ENCODE measurements at regions of chr16 and their contacts with region 1.

Region 1: DNA sequence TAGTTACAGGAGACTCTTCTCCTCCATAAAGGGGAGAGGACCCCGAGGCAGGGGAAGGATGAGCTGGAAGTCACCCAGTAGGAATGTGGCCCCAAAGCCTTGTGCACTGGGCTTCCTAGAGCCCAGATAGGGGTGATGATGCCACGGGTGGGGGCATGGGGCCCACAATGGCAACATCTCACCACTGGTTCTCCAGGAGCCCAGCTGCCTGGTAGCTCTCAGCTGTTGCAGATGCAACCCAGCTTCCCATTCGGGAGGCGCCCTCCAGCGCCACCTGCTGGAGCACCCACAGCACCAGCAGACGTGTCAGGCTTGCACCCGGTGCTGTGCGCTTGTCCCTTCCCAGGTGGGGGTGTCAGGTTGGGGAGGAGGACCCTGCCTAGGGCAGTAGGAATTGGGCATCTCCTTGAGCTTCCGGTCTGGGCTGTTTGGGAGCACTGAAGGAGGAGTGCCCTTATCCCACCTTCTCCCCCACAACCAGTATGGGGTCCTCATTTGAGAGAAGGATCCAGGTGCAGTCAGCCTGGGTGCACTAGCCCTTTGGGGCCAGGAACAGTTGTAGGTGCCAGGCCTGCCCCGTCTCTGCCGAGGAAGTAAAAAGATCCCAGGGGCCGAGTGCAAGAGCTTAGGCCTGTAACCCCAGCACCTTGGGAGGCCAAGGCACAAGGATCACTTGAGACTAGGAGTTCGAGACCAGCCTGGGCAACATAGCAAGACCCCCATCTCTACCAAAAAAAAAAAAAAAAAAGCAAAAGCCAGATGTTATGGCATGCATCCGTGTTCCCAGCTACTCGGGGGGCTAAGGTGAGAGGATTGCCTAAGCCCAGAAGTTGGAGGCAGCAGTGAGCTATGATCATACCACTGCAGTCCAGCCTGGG is 14.4 kb downstream of the CDIPT start:
- DNase-seq: peak; percentile 71 to 87 (median 81)
- ATAC-seq: peak; percentile 96
- H3K4me3 ChIP-seq: no peak overlapping the region
- H3K4me3 Mint-ChIP-seq: no peak overlapping the region
- H3K27ac ChIP-seq: no peak overlapping the region
- H3K27ac Mint-ChIP-seq: peak overlapping the region; percentile 18 to 88 (median 56)
- H3K4me1 ChIP-seq: peaks cover 0 to 7% of the 10 kb centered on the region in 2 donors
- H3K4me1 Mint-ChIP-seq: peaks cover 8 to 17% (median 9%) of the 10 kb centered on the region in 7 donors
- H3K27me3 ChIP-seq: no peaks in the 10 kb centered on the region
- H3K27me3 Mint-ChIP-seq: no peaks in the 10 kb centered on the region

Region 2: DNA sequence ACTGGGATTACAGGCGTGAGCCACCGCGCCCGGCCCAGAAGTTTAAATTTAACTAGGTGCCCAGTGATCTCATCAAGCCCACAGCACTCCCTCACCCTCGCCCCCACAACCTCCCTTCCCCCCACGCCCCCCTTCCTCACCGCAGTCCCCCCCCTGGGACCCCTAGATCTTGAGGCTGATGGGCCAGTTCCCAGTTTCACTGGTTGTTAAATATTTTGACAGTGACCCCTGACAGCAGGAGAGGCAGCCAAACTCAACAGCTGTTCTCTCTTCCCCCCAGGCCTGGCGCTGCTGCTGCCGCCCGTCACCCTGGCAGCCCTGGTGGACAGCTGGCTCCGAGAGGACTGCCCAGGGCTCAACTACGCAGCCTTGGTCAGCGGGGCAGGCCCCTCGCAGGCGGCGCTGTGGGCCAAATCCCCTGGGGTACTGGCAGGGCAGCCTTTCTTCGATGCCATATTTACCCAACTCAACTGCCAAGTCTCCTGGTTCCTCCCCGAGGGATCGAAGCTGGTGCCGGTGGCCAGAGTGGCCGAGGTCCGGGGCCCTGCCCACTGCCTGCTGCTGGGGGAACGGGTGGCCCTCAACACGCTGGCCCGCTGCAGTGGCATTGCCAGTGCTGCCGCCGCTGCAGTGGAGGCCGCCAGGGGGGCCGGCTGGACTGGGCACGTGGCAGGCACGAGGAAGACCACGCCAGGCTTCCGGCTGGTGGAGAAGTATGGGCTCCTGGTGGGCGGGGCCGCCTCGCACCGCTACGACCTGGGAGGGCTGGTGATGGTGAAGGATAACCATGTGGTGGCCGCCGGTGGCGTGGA is 154.1 kb before region 1 on chr16:
- CTCF ChIA-PET with region 1: interaction called, 69 read pairs
- POLR2A ChIA-PET with region 1: interaction called, 12 read pairs
- intact Hi-C with region 1: loop called (anchors 1 to 2 kb)
- DNase-seq: no peak
- ATAC-seq: no peak
- H3K4me3 ChIP-seq: no peak overlapping the region
- H3K4me3 Mint-ChIP-seq: no peak overlapping the region
- H3K27ac ChIP-seq: no peak overlapping the region
- H3K27ac Mint-ChIP-seq: no peak overlapping the region
- H3K4me1 ChIP-seq: no peaks in the 10 kb centered on the region
- H3K4me1 Mint-ChIP-seq: peaks cover 0 to 11% (median 5%) of the 10 kb centered on the region in 7 donors
- H3K27me3 ChIP-seq: no peaks in the 10 kb centered on the region
- H3K27me3 Mint-ChIP-seq: no peaks in the 10 kb centered on the region

Region 3: GRCh38 chr16:29815793-29816693 is 32.6 kb before region 1 on chr16 and contains the start of gene PAGR1:
- CTCF ChIA-PET with region 1: interaction called, 108 read pairs
- POLR2A ChIA-PET with region 1: interaction called, 31 read pairs
- intact Hi-C with region 1: loop called (anchors 1 kb)
- DNase-seq: peak; percentile 92 to 99 (median 99)
- ATAC-seq: peak; percentile 87
- H3K4me3 ChIP-seq: peak within 1 kb of the TSS; percentile 99
- H3K4me3 Mint-ChIP-seq: peak within 1 kb of the TSS; percentile 85 to 100 (median 96)
- H3K27ac ChIP-seq: peak within 1 kb of the TSS; percentile 92
- H3K27ac Mint-ChIP-seq: peak within 1 kb of the TSS; percentile 95 to 99 (median 99)
- H3K4me1 ChIP-seq: peaks cover 29 to 41% of the 10 kb centered on the region in 2 donors
- H3K4me1 Mint-ChIP-seq: peaks cover 40 to 75% (median 59%) of the 10 kb centered on the region in 7 donors
- H3K27me3 ChIP-seq: no peaks in the 10 kb centered on the region
- H3K27me3 Mint-ChIP-seq: peaks cover 0 to 22% (median 0%) of the 10 kb centered on the region in 5 donors
- total RNA-seq, gene PAGR1: 17.5 to 42.0 (median 25.7) TPM

Region 4: GRCh38 chr16:29825145-29826044 is 23.3 kb before region 1 on chr16:
- CTCF ChIA-PET with region 1: interaction called, 108 read pairs
- POLR2A ChIA-PET with region 1: interaction called, 40 read pairs
- intact Hi-C with region 1: loop called (anchors 1 kb)
- DNase-seq: peak in 6 of 9 donors; percentile 36 to 52 (median 43)
- ATAC-seq: no peak
- H3K4me3 ChIP-seq: peak overlapping the region; percentile 44
- H3K4me3 Mint-ChIP-seq: peak overlapping the region; percentile 70 to 95 (median 86)
- H3K27ac ChIP-seq: peak overlapping the region; percentile 72
- H3K27ac Mint-ChIP-seq: peak overlapping the region; percentile 56 to 99 (median 96)
- H3K4me1 ChIP-seq: peaks cover 61 to 81% of the 10 kb centered on the region in 2 donors
- H3K4me1 Mint-ChIP-seq: peaks cover 39 to 97% (median 57%) of the 10 kb centered on the region in 7 donors
- H3K27me3 ChIP-seq: no peaks in the 10 kb centered on the region
- H3K27me3 Mint-ChIP-seq: no peaks in the 10 kb centered on the region

Region 5: GRCh38 chr16:29836623-29837022 is 12.0 kb before region 1 on chr16:
- CTCF ChIA-PET with region 1: interaction called, 22 read pairs
- POLR2A ChIA-PET with region 1: interaction called, 5 read pairs
- intact Hi-C with region 1: no loop called
- DNase-seq: no peak
- ATAC-seq: no peak
- H3K4me3 ChIP-seq: no peak overlapping the region
- H3K4me3 Mint-ChIP-seq: no peak overlapping the region
- H3K27ac ChIP-seq: no peak overlapping the region
- H3K27ac Mint-ChIP-seq: peak overlapping the region in 1 of 9 donors; percentile 28
- H3K4me1 ChIP-seq: no peaks in the 10 kb centered on the region
- H3K4me1 Mint-ChIP-seq: peaks cover 0 to 9% (median 5%) of the 10 kb centered on the region in 7 donors
- H3K27me3 ChIP-seq: no peaks in the 10 kb centered on the region
- H3K27me3 Mint-ChIP-seq: no peaks in the 10 kb centered on the region

Region 6: GRCh38 chr16:30018731-30019158 is 170.1 kb after region 1 on chr16:
- CTCF ChIA-PET with region 1: interaction called, 3 read pairs
- POLR2A ChIA-PET with region 1: no interaction called
- intact Hi-C with region 1: loop called in 1 of 2 experiments (anchors 1 kb)
- DNase-seq: no peak
- ATAC-seq: no peak
- H3K4me3 ChIP-seq: no peak overlapping the region
- H3K4me3 Mint-ChIP-seq: peak overlapping the region in 1 of 10 donors; percentile 0
- H3K27ac ChIP-seq: no peak overlapping the region
- H3K27ac Mint-ChIP-seq: no peak overlapping the region
- H3K4me1 ChIP-seq: peaks cover 8% of the 10 kb centered on the region in 2 donors
- H3K4me1 Mint-ChIP-seq: peaks cover 5 to 17% (median 10%) of the 10 kb centered on the region in 7 donors
- H3K27me3 ChIP-seq: no peaks in the 10 kb centered on the region
- H3K27me3 Mint-ChIP-seq: peaks cover 0 to 29% (median 0%) of the 10 kb centered on the region in 5 donors

Measured in naive thymus-derived CD4-positive, alpha-beta T cell (primary cell).